ENCODE measurements at regions of chr17 and their contacts with region 1.

Region 1: DNA sequence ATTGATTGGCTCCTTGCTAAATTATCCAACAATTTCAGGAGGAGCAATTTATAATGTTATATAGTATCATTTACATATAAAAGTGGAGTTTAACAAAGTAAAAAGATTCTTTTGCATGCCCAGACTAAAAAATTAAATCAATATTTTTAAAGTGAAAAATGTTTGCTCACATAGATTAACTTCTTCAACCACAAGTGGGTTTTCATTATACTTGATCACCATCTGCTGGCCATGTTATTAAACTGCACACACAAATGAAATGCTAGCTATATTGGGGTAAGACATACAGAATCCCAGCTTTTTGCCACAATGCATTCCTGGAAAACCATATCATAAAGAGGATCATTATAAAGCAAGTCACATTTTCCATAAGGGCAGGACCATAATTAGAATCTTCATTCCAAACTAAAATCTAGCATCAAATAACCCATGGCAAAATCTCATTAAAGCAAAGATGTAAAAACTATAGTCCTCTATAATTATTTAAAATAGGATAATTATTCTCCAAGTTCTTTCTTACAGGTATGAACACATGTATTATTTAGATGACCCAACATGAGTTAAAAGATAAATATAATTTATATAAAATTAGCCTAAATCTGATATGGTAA is 26.3 kb downstream of the CEP112 start:
- DNase-seq: no peak
- ATAC-seq: no peak
- H3K4me3 ChIP-seq: no peak overlapping the region
- H3K27ac ChIP-seq: no peak overlapping the region
- H3K4me1 ChIP-seq: peaks cover 0 to 7% (median 0%) of the 10 kb centered on the region in 12 donors
- H3K27me3 ChIP-seq: no peaks in the 10 kb centered on the region
- CTCF ChIP-seq: peak; percentile 57 to 80 (median 72)
- POLR2A ChIP-seq: no peak

Region 2: GRCh38 chr17:65231662-65232335 is 933.8 kb before region 1 on chr17:
- intact Hi-C with region 1: loop called (anchors 2 to 5 kb)
- DNase-seq: peak in 3 of 5 donors; percentile 19 to 37 (median 29)
- ATAC-seq: peak; percentile 61 to 88 (median 80)
- H3K4me3 ChIP-seq: no peak overlapping the region
- H3K27ac ChIP-seq: no peak overlapping the region
- H3K4me1 ChIP-seq: peaks cover 0 to 14% (median 0%) of the 10 kb centered on the region in 12 donors
- H3K27me3 ChIP-seq: peaks cover 0 to 23% (median 0%) of the 10 kb centered on the region in 9 donors
- CTCF ChIP-seq: peak; percentile 27 to 69 (median 54)
- POLR2A ChIP-seq: no peak

Region 3: GRCh38 chr17:65294179-65294720 is 871.4 kb before region 1 on chr17:
- intact Hi-C with region 1: loop called (anchors 1 to 10 kb)
- DNase-seq: peak; percentile 30 to 63 (median 56)
- ATAC-seq: peak; percentile 55 to 95 (median 88)
- H3K4me3 ChIP-seq: no peak overlapping the region
- H3K27ac ChIP-seq: no peak overlapping the region
- H3K4me1 ChIP-seq: peaks cover 0 to 6% (median 0%) of the 10 kb centered on the region in 12 donors
- H3K27me3 ChIP-seq: no peaks in the 10 kb centered on the region
- CTCF ChIP-seq: peak; percentile 53 to 81 (median 66)
- POLR2A ChIP-seq: no peak

Region 4: GRCh38 chr17:65455972-65456343 is 709.7 kb before region 1 on chr17:
- intact Hi-C with region 1: loop called in 4 of 10 experiments (anchors 5 to 10 kb)
- DNase-seq: peak in 4 of 5 donors; percentile 15 to 45 (median 34)
- ATAC-seq: peak; percentile 80 to 90 (median 87)
- H3K4me3 ChIP-seq: peak overlapping the region in 2 of 12 donors; percentile 7 to 27
- H3K27ac ChIP-seq: peak overlapping the region in 8 of 12 donors; percentile 11 to 75 (median 62)
- H3K4me1 ChIP-seq: peaks cover 0 to 19% (median 5%) of the 10 kb centered on the region in 12 donors
- H3K27me3 ChIP-seq: peaks cover 0 to 2% (median 0%) of the 10 kb centered on the region in 9 donors
- CTCF ChIP-seq: peak in 11 of 12 donors; percentile 8 to 57 (median 44)
- POLR2A ChIP-seq: no peak

Region 5: DNA sequence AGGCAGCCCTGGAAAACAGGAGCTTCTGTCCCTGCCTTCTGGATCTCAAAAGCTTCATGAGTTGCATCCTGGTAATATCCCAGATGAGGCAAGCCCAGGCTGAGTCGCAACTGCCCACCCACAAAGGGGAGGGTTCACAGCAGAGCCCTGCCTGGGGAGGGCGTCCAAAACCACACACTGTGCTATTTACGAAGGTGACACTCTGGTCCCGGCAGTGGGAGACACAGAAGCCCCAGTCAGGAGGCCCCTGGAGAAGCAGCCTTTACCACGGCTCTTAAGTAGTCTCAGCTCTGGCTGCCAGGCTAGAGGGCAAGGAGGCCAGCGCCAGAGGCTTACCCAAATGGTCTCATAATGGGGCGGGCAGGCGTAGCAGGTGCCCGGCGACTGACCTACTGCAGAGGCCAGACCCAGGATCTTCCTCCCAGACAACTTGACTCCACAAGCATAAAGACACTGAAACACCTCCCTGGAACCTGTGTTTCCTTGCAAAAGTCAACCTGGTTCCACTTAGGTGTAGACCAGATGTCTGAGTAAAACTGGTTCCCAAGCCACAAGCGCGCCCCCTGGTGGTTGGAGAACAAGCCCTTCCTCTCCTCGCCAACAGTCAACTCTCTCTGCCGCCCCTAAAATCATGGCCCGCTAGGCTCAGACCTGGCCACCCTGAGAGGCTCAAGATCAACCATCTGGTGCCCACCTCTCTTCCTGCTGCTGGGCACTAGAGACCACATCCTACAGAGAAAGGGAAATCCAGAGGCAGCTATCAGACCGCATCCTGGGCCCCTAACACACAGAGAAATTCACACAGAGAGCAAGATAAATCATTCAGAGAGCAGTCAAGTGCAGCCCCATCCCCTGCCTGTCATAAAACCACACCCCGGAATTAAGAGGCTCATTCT is 609.4 kb before region 1 on chr17:
- intact Hi-C with region 1: loop called in 4 of 10 experiments (anchors 10 kb)
- DNase-seq: peak; percentile 66 to 89 (median 78)
- ATAC-seq: peak; percentile 6 to 39 (median 27)
- H3K4me3 ChIP-seq: peak overlapping the region in 6 of 12 donors; percentile 4 to 98 (median 8)
- H3K27ac ChIP-seq: peak overlapping the region in 2 of 12 donors; percentile 35 to 56
- H3K4me1 ChIP-seq: peaks cover 0 to 40% (median 20%) of the 10 kb centered on the region in 12 donors
- H3K27me3 ChIP-seq: peaks cover 0 to 14% (median 0%) of the 10 kb centered on the region in 9 donors
- CTCF ChIP-seq: peak; percentile 69 to 84 (median 74)
- POLR2A ChIP-seq: no peak

Region 6: DNA sequence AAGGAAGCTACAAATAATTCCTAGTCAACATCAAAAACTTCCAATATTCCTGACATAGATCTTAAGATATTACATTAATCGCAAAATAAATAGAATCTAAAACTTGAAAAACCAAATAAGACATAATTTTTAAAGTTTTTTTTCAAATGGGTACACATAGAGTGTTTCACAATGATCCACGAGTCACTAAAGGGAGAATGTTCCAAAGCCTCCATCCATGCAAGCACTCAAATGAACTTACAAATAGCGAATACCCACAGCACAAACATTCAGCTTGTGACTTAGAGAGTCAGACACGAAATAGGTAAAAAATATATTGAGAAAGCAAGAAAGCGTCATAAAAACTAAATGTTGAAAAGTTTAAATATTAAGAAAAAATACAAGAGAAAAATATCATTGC is 39.4 kb before region 1 on chr17:
- intact Hi-C with region 1: no loop called
- DNase-seq: no peak
- ATAC-seq: no peak
- H3K4me3 ChIP-seq: no peak overlapping the region
- H3K27ac ChIP-seq: no peak overlapping the region
- H3K4me1 ChIP-seq: no peaks in the 10 kb centered on the region
- H3K27me3 ChIP-seq: no peaks in the 10 kb centered on the region
- CTCF ChIP-seq: no peak
- POLR2A ChIP-seq: no peak

Region 7: DNA sequence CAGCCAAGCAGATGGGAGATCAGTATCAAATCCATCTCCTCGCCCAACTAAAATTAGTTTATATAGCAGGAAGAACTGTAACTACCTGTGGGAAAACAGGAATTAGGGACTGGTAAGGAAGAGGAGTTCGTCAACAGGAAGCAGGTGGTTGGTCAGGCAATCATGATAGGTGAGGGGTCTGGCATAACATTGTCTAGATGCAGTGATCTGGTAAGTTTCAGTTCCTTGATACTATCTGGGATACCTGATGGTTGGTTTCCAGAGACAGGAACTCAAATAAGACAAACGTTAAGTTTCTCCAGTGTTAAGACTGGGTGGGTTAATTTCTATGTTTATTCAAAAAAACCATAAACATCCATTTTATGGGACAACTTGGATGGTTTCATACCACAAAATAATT is 27.5 kb before region 1 on chr17:
- intact Hi-C with region 1: no loop called
- DNase-seq: no peak
- ATAC-seq: no peak
- H3K4me3 ChIP-seq: no peak overlapping the region
- H3K27ac ChIP-seq: no peak overlapping the region
- H3K4me1 ChIP-seq: no peaks in the 10 kb centered on the region
- H3K27me3 ChIP-seq: no peaks in the 10 kb centered on the region
- CTCF ChIP-seq: no peak
- POLR2A ChIP-seq: no peak

Measured in heart left ventricle (tissue), 16 donors.